Mammary epithelial cell (primary cell): ENCODE measurements at regions of chr12 and their contacts with region 1.

Region 1: GRCh38 chr12:112294793-112295192 is 87.4 kb downstream of the HECTD4 start:
- DNase-seq: no peak
- H3K4me3 ChIP-seq: no peak overlapping the region
- H3K27ac ChIP-seq: no peak overlapping the region
- H3K4me1 ChIP-seq: no peaks in the 10 kb centered on the region
- H3K27me3 ChIP-seq: no peaks in the 10 kb centered on the region
- CTCF ChIP-seq: peak in 1 of 2 donors; percentile 16

Region 2: DNA sequence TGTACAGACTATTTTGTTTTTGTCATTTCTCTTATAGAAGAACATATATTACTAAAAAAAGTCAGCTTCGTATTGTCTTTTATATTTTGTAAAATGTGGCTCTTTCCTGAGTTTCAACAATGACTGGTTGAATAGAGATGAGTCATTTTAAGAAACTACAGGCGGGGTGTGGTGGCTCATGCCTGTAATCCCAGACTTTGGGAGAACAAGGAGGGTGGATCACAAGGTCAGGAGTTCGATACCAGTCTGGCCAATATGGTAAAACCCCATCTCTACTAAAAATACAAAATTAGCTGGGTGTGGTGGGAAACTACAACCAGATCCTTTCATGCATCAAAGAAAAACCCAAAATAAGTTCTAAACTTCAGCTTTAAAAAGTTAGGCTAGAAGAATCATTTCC is 58.6 kb after region 1 on chr12:
- CTCF ChIA-PET with region 1: no interaction called
- dilution Hi-C with region 1: loop called (anchors 5 kb)
- in situ Hi-C with region 1: no loop called
- intact Hi-C with region 1: no loop called
- DNase-seq: peak; percentile 65
- H3K4me3 ChIP-seq: no peak overlapping the region
- H3K27ac ChIP-seq: peak overlapping the region; percentile 82
- H3K4me1 ChIP-seq: peaks cover 9% of the 10 kb centered on the region
- H3K27me3 ChIP-seq: no peaks in the 10 kb centered on the region
- CTCF ChIP-seq: no peak

Region 3: GRCh38 chr12:112401903-112402498 is 107.2 kb after region 1 on chr12:
- CTCF ChIA-PET with region 1: no interaction called
- dilution Hi-C with region 1: loop called (anchors 5 kb)
- in situ Hi-C with region 1: no loop called
- intact Hi-C with region 1: no loop called
- DNase-seq: no peak
- H3K4me3 ChIP-seq: no peak overlapping the region
- H3K27ac ChIP-seq: no peak overlapping the region
- H3K4me1 ChIP-seq: peaks cover 6% of the 10 kb centered on the region
- H3K27me3 ChIP-seq: no peaks in the 10 kb centered on the region
- CTCF ChIP-seq: no peak

Region 4: DNA sequence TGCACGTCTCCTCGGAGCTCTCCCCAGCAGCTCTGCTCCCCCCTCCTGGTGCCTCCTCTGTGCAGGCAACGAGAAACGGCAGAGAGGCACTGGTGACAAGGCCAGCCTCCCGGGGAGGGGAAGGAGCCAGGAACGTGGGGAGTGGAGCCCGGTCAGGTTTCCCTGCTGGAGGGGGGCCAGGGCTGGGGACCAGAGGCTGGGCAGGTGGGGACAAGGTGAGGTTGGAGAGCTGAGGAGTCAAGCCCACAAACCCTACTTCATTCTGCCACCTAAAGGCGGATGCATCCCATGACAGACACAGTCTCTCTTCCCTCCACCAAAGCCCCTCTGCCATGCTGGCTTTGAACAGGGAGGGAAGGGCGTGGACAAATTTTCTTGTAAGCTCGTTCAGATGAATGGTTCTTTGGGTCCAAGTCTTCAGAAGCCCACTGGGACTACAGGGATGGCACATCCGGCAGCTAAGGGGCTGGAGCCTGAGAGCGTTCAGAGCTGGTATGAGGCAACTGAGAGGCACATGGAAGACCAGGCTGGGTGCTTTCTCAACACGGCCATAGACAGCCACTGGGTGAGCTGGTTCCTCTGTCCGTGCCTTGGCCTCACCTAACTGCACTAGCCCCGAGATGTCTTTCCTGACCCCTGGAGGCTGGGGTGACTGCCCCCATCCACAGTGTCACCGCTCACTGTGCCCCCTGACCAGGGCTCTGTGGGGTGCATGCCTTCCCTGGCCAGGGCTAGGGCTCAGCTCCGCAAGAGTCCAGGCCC is 1565.4 kb after region 1 on chr12:
- CTCF ChIA-PET with region 1: interaction called, 18 read pairs
- dilution Hi-C with region 1: no loop called
- in situ Hi-C with region 1: no loop called
- intact Hi-C with region 1: no loop called
- DNase-seq: no peak
- H3K4me3 ChIP-seq: no peak overlapping the region
- H3K27ac ChIP-seq: no peak overlapping the region
- H3K4me1 ChIP-seq: peaks cover 21% of the 10 kb centered on the region
- H3K27me3 ChIP-seq: no peaks in the 10 kb centered on the region
- CTCF ChIP-seq: peak in 1 of 2 donors; percentile 2